Breast epithelium (tissue), 4 donors: ENCODE measurements at regions of chr15 and their contacts with region 1.

Region 1: DNA sequence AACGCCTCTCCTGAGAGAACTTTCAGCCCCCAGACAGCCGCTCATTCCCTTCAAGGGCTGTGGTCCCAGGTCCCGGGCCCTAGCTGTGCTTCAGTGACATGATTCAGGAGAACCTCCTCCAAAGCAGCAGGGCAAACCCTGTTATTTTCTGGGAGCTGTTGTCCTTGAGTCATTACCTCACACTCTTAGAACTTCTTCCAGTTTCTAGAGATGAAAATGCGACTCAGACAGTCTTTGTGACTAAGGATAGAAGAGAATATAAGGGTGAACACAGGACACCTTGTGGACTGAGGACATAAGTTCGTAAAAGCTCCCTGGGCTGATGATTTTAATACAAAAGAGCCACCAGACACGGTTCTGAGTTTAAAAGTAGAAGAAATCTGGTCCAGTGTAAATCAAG is 203.8 kb downstream of the RORA start:
- DNase-seq: no peak
- H3K4me3 ChIP-seq: no peak overlapping the region
- H3K27ac ChIP-seq: no peak overlapping the region
- H3K4me1 ChIP-seq: no peaks in the 10 kb centered on the region
- H3K27me3 ChIP-seq: no peaks in the 10 kb centered on the region
- CTCF ChIP-seq: no peak
- POLR2A ChIP-seq: no peak

Region 2: DNA sequence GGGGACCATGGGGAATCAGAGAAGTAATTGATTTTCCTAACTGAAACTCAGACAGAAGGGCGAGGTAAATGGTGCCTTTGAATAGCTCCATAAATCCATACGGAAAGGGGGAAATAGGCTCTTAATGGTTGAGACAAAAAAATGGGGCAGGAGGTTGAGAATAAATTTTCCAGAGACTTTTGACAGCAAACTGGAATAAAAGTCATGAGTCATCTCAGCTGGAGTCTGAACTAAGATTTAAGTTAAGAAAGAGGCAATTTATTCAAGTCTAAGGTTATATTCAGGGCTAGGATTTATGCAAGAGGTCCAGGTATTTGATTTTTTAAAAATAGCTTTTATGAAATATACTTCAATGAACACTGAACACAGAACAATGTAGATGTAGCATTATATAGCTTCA is 442.5 kb after region 1 on chr15:
- intact Hi-C with region 1: loop called (anchors 5 kb)
- DNase-seq: no peak
- H3K4me3 ChIP-seq: no peak overlapping the region
- H3K27ac ChIP-seq: no peak overlapping the region
- H3K4me1 ChIP-seq: no peaks in the 10 kb centered on the region
- H3K27me3 ChIP-seq: no peaks in the 10 kb centered on the region
- CTCF ChIP-seq: no peak
- POLR2A ChIP-seq: no peak